Head of caudate nucleus (tissue), 42 donors: ENCODE measurements at regions of chr4 and their contacts with region 1.

Region 1: DNA sequence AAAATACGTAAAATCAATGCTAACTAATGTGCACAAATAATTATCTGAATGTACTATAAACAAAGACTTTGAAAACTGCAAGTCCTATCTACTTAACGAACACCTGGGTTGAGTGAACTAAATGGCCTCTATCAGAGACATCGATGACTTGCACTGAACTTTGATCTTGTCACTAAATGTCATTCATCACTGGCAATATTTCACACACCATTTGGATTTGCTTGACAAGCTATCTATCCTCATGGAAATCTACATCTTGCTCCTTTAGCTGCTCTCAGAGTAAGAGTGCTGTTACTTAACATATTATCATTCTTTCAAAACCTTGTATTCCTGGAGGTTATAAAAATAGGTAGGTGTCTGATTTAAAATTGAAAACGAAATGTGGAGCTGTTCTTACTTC is 289.3 kb downstream of the TLL1 start:
- DNase-seq: no peak

Region 2: DNA sequence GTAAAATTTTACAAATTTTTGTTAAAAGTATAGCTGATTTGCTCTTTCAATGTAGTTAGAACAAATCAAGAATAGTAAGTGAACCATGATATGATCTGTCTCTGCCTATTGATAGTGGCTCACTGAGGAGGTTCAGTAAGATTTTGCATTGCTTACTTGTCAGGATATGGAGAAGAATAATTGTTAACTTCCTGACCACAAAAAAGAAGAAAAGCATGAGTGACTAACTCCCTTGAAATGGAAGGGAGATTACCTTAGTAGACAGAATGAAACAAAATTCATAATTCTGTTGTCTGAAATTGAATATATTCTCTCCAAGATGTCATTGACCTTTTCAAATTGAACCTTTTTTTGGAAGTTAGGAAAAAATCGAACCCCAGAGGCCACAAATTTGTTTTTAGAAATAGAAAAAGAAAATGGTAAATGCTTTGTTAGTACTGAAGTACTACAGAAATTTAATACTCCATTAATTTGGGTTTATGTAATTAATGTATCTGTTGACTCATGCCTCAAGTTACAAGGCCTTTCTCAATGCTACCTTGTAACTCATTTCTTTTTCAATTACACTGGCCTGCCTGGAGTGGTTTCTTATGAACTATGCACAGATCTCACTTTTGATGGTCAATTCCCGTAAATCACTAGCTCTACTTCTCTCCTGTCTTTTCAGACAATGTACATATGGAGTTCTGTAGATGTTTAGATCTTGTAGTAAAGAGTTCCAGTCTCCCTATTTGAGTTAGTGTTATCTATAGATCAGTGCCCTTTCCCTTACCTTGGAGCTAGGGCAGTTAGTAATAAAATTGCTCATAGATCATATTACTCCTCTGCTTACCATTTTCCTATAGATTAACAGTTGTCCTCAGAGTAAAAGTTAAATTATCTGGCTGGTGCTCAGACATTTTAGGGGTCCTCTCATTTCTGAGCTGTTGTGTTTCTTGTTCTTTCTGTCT is 149.9 kb before region 1 on chr4:
- intact Hi-C with region 1: no loop called
- DNase-seq: no peak

Region 3: DNA sequence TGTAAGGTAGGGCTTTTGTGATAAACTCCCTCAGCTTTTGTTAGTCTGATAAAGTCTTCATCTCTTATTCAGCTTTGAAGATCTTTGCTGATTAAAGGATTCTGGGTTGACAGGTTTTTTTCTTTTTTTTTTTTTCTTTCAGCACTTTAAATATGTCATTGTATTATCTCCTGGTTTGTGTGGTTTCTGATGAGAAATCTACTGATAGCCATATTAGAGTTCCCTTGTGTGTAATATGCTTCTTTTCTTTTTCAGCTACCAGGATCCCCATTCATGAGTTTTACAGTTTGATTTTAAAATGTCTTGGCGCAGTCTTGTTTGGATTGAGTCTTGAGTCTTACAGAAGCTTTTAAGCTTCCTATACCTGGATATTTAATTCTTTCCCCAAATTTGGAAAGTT is 215.3 kb after region 1 on chr4:
- intact Hi-C with region 1: no loop called
- DNase-seq: no peak

Region 4: GRCh38 chr4:167622481-167623246 is 1460.3 kb after region 1 on chr4:
- intact Hi-C with region 1: loop called (anchors 5 kb)
- DNase-seq: peak; percentile 4 to 88 (median 74)